ENCODE measurements at regions of chr14 and their contacts with region 1.

Region 1: GRCh38 chr14:102440392-102440791 is 69.2 kb downstream of the ANKRD9 start:
- DNase-seq: no peak
- H3K4me3 ChIP-seq: no peak overlapping the region
- H3K27ac ChIP-seq: no peak overlapping the region
- H3K4me1 ChIP-seq: peaks cover 10% of the 10 kb centered on the region
- H3K27me3 ChIP-seq: no peaks in the 10 kb centered on the region
- CTCF ChIP-seq: no peak

Region 2: DNA sequence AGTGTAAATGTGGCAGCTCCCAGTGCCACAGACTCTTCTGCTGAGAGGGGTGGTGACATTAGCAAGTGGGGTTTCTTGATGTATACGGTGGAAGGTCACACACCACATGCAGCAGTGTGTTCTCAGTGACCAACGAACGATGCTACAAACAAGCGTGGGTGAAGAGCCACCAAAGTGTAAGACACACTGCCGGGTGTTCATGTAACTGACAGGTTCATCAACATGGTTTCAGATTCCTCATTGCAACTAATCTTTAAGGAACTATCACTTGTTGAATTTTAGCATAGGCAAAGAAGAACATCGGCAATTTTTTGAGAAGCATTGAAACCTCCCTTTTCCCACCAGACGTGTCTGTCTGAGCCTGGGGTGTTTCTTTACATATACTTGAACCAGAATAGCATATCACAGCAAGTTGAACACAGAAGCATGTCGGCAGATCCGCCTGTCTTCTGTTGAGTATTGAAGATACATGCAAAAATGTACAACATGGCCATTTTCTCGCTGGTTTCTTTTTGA is 620.1 kb before region 1 on chr14:
- intact Hi-C with region 1: no loop called
- DNase-seq: no peak
- H3K4me3 ChIP-seq: no peak overlapping the region
- H3K27ac ChIP-seq: peak overlapping the region; percentile 25
- H3K4me1 ChIP-seq: peaks cover 85% of the 10 kb centered on the region
- H3K27me3 ChIP-seq: no peaks in the 10 kb centered on the region
- CTCF ChIP-seq: no peak

Region 3: GRCh38 chr14:102390064-102390855 is 50.1 kb before region 1 on chr14:
- intact Hi-C with region 1: no loop called
- DNase-seq: no peak
- H3K4me3 ChIP-seq: no peak overlapping the region
- H3K27ac ChIP-seq: no peak overlapping the region
- H3K4me1 ChIP-seq: peaks cover 21% of the 10 kb centered on the region
- H3K27me3 ChIP-seq: no peaks in the 10 kb centered on the region
- CTCF ChIP-seq: no peak

Region 4: GRCh38 chr14:102493096-102493495 is 52.7 kb after region 1 on chr14:
- intact Hi-C with region 1: no loop called
- DNase-seq: no peak
- H3K4me3 ChIP-seq: no peak overlapping the region
- H3K27ac ChIP-seq: no peak overlapping the region
- H3K4me1 ChIP-seq: peaks cover 3% of the 10 kb centered on the region
- H3K27me3 ChIP-seq: no peaks in the 10 kb centered on the region
- CTCF ChIP-seq: no peak

Region 5: DNA sequence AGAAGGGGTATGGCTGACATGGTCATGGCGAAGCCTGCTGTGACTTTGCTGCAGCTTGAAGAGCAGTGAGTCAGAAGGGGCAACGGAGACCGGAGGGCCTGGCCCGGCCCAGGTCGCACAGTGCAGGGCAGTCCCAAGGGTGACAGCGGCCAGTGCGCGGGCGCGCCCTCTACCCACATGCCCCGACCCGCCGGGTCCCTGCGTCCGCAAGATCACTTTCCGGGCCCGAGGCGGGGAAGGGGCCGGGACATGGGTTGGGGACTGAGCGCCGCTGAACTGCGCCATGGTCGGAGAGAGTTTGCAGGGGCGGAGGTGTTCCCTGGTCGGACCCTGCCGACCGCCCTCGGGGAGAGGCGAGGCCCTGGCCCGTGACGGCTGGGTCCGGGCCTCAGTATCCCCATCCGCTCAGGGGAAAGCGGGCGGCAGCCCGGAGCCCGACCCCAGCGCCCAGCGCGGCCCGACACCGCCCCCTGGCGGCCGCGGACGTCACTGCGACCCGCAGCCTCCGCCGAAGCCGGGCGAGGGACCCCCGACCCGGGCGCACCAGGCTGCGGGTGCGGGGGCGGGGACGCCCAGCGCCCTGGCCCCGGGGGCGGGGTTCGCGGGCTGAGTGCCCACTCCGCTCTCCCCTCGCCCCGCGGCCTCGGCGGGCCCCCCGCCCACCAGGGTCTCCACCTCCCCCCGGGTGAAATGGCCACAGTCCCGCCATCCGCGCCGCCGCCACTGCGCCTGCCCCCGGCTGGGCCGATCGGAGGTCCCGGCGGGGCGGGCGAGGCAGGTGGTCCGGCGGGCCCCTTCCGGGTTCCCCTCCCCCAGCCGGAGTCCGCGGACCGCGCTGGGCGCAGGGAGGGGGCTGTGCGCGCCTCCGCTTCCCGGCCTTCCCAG is 76.4 kb after region 1 on chr14:
- intact Hi-C with region 1: loop called (anchors 2 kb)
- DNase-seq: peak; percentile 57
- H3K4me3 ChIP-seq: peak overlapping the region; percentile 87
- H3K27ac ChIP-seq: peak overlapping the region; percentile 70
- H3K4me1 ChIP-seq: peaks cover 13% of the 10 kb centered on the region
- H3K27me3 ChIP-seq: no peaks in the 10 kb centered on the region
- CTCF ChIP-seq: peak; percentile 95